Heart left ventricle (tissue), 16 donors: ENCODE measurements at regions of chr11 and their contacts with region 1.

Region 1: GRCh38 chr11:82494988-82495432 is 238.7 kb downstream of the FAM181B start:
- DNase-seq: no peak
- ATAC-seq: no peak
- H3K4me3 ChIP-seq: no peak overlapping the region
- H3K27ac ChIP-seq: no peak overlapping the region
- H3K4me1 ChIP-seq: no peaks in the 10 kb centered on the region
- H3K27me3 ChIP-seq: no peaks in the 10 kb centered on the region
- CTCF ChIP-seq: peak in 4 of 12 donors; percentile 16 to 21 (median 18)
- POLR2A ChIP-seq: no peak

Region 2: DNA sequence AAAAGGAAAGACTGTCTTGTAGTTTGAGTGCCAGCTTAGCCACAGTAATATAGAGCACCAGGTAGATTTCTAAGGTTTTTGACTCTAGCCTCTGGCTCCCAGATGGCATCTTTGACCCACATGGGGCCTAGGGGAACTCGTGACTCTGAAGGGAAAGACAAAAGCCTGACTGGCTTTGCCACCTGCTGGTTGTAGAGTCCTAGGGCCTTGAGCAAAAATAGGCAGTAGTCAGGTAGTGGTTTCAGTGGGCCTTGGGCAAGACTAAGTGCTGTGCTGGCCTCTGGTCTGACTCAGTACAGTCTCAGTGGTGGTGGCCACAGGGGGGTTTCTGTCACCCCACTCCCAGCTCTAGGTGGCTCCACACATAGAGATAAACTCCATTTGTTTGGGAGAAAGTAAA is 110.7 kb before region 1 on chr11:
- intact Hi-C with region 1: no loop called
- DNase-seq: no peak
- ATAC-seq: no peak
- H3K4me3 ChIP-seq: no peak overlapping the region
- H3K27ac ChIP-seq: no peak overlapping the region
- H3K4me1 ChIP-seq: no peaks in the 10 kb centered on the region
- H3K27me3 ChIP-seq: no peaks in the 10 kb centered on the region
- CTCF ChIP-seq: no peak
- POLR2A ChIP-seq: no peak

Region 3: GRCh38 chr11:82539669-82540068 is 44.7 kb after region 1 on chr11:
- intact Hi-C with region 1: loop called in 1 of 10 experiments (anchors 5 kb)
- DNase-seq: no peak
- ATAC-seq: no peak
- H3K4me3 ChIP-seq: no peak overlapping the region
- H3K27ac ChIP-seq: no peak overlapping the region
- H3K4me1 ChIP-seq: no peaks in the 10 kb centered on the region
- H3K27me3 ChIP-seq: no peaks in the 10 kb centered on the region
- CTCF ChIP-seq: no peak
- POLR2A ChIP-seq: no peak